ENCODE measurements at regions of chr4 and their contacts with region 1.

Region 1: DNA sequence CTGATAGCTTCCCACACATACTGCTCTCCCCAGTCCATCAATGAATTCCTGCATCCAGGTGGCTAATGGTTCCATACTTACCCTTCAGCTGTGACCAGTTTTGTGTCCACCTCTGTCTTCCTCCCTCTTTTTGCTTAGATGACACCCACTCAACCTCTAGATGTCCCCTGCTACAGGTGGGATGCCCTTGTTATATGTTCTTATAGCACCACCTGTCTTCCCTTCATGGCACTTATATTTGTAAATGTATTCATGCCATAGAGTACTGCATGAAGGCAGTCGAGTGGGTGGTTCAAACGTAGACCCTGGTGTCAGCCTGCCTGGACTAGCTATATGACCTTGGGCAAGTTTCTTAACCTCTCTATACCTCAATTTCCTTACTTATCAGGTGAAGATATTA is 6.5 kb upstream of the USP46 start:
- DNase-seq: peak in 1 of 9 donors; percentile 0
- ATAC-seq: peak; percentile 50
- H3K4me3 ChIP-seq: no peak overlapping the region
- H3K4me3 Mint-ChIP-seq: no peak overlapping the region
- H3K27ac ChIP-seq: no peak overlapping the region
- H3K27ac Mint-ChIP-seq: peak overlapping the region in 1 of 9 donors; percentile 32
- H3K4me1 ChIP-seq: peaks cover 0 to under 1% of the 10 kb centered on the region in 2 donors
- H3K4me1 Mint-ChIP-seq: peaks cover 2 to 9% (median 3%) of the 10 kb centered on the region in 7 donors
- H3K27me3 ChIP-seq: no peaks in the 10 kb centered on the region
- H3K27me3 Mint-ChIP-seq: peaks cover 30 to 62% (median 43%) of the 10 kb centered on the region in 5 donors

Region 2: GRCh38 chr4:52376132-52376704 is 289.4 kb before region 1 on chr4:
- CTCF ChIA-PET with region 1: no interaction called
- POLR2A ChIA-PET with region 1: no interaction called
- intact Hi-C with region 1: loop called in 1 of 2 experiments (anchors 1 kb)
- DNase-seq: peak in 5 of 9 donors; percentile 17 to 25 (median 21)
- ATAC-seq: no peak
- H3K4me3 ChIP-seq: no peak overlapping the region
- H3K4me3 Mint-ChIP-seq: no peak overlapping the region
- H3K27ac ChIP-seq: no peak overlapping the region
- H3K27ac Mint-ChIP-seq: no peak overlapping the region
- H3K4me1 ChIP-seq: no peaks in the 10 kb centered on the region
- H3K4me1 Mint-ChIP-seq: peaks cover 0 to 3% (median 0%) of the 10 kb centered on the region in 7 donors
- H3K27me3 ChIP-seq: peaks cover 0 to 5% of the 10 kb centered on the region in 2 donors
- H3K27me3 Mint-ChIP-seq: peaks cover 8 to 34% (median 15%) of the 10 kb centered on the region in 5 donors

Region 3: DNA sequence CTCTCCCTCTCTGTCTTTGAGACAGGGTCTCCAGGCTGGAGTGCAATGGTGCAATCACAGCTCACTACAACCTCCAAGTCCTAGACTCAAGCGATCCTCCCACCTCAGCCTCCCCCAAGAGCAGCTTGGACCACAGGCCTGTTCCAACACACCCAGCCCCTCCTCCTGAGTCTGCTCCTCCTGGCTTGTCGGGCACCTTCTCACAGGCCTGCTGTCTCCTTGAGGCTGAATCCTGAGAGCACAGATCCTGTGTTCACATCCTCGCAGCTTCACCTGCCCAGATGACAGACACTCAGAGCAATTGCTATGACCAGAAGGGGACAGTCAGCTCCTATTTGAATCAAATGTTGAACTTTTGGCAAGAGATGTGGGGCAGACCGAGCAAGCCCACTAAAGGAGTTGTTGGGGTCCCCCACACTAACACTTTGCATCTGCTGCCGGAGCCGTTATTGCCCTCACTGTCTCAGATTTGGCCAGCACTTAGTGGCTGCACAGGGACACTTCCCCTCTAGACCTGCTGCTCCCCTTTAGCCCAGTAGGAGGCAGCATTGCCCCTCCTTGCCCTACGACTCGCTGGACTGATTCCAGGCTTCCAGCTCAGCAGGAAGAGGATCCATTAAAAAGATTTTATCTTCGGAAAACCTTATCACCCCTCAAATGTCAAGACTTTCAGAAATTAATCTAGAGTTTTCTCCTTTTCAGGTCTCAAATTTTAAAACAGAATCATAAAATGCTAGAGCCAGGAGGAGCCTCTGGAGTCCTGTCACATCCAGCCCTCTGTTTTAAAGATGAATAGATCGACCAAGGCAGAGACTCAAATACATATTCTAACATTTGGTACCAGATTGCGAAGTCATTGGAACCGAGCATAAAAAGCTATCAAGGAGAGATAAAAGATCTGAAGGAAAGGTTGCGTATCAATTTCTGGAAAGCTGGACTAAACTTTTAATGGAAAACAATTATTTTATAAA is 120.2 kb before region 1 on chr4:
- CTCF ChIA-PET with region 1: no interaction called
- POLR2A ChIA-PET with region 1: no interaction called
- intact Hi-C with region 1: loop called in 1 of 2 experiments (anchors 2 kb)
- DNase-seq: peak; percentile 2 to 63 (median 26)
- ATAC-seq: peak; percentile 75
- H3K4me3 ChIP-seq: no peak overlapping the region
- H3K4me3 Mint-ChIP-seq: no peak overlapping the region
- H3K27ac ChIP-seq: no peak overlapping the region
- H3K27ac Mint-ChIP-seq: no peak overlapping the region
- H3K4me1 ChIP-seq: no peaks in the 10 kb centered on the region
- H3K4me1 Mint-ChIP-seq: no peaks in the 10 kb centered on the region
- H3K27me3 ChIP-seq: no peaks in the 10 kb centered on the region
- H3K27me3 Mint-ChIP-seq: peaks cover 5 to 24% (median 6%) of the 10 kb centered on the region in 5 donors

Region 4: GRCh38 chr4:52824603-52825459 is 159.2 kb after region 1 on chr4:
- CTCF ChIA-PET with region 1: no interaction called
- POLR2A ChIA-PET with region 1: no interaction called
- intact Hi-C with region 1: no loop called
- DNase-seq: peak in 5 of 9 donors; percentile 6 to 29 (median 15)
- ATAC-seq: peak; percentile 36
- H3K4me3 ChIP-seq: no peak overlapping the region
- H3K4me3 Mint-ChIP-seq: peak overlapping the region in 4 of 10 donors; percentile 1 to 42 (median 8)
- H3K27ac ChIP-seq: no peak overlapping the region
- H3K27ac Mint-ChIP-seq: peak overlapping the region in 2 of 9 donors; percentile 7 to 32
- H3K4me1 ChIP-seq: peaks cover 0 to 5% of the 10 kb centered on the region in 2 donors
- H3K4me1 Mint-ChIP-seq: peaks cover 9 to 34% (median 24%) of the 10 kb centered on the region in 7 donors
- H3K27me3 ChIP-seq: no peaks in the 10 kb centered on the region
- H3K27me3 Mint-ChIP-seq: no peaks in the 10 kb centered on the region